Activated T-helper 1 cell treated with anti-CD3 and anti-CD28 coated beads, Interleukin-12 subunit alpha, Interleukin-12 subunit beta, Interleukin-2, Interleukin-4 antibody, amounts not matched to agents 30 ng/mL and 10 ng/mL and 1 ng/mL, durations not matched to agents 14 hours and 24 hours and 36 hours (primary cell): ENCODE measurements at regions of chr14 and their contacts with region 1.

Region 1: GRCh38 chr14:20855652-20856291 is 35.4 kb upstream of the RNASE3 start:
- DNase-seq: peak; percentile 25
- H3K4me3 Mint-ChIP-seq: no peak overlapping the region
- H3K27ac Mint-ChIP-seq: no peak overlapping the region
- H3K4me1 Mint-ChIP-seq: peaks cover 9% of the 10 kb centered on the region
- H3K27me3 Mint-ChIP-seq: peaks cover 13% of the 10 kb centered on the region

Region 2: DNA sequence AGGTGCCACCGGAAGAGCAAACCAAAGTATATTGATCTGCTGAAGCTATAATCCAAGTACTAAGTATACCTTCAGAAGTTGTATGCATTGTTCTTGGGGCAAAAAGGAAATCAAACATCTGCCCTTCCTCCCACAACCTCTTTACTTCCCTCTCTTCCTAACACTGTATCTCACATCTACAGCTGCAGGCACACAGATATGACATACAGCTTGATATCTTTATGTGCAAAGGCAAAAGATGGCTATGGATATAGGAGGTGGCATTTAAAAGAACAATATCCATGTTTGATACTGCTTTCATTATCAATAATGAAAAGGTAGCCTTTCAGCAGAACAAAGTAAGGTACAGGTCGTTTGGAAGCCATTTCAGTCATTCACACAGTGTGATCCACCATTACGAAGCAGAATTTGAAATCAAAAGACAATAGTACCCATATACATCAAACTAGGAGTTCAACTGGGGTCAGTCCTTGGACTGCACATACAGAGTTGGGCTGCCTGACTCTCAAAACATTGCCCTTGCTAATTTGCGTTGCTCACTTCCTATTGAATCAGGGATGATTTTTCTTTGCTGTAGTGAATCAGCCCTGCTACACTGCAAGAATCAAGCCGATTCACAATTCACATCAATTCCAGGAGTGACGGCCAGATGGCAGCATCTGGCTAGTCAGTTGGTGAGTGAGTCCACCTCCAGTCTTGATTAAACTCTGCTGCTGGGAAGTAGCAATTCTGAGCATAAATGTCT is 158.3 kb before region 1 on chr14:
- intact Hi-C with region 1: loop called (anchors 1 kb)
- DNase-seq: peak; percentile 44
- H3K4me3 Mint-ChIP-seq: no peak overlapping the region
- H3K27ac Mint-ChIP-seq: no peak overlapping the region
- H3K4me1 Mint-ChIP-seq: no peaks in the 10 kb centered on the region
- H3K27me3 Mint-ChIP-seq: peaks cover 8% of the 10 kb centered on the region

Region 3: DNA sequence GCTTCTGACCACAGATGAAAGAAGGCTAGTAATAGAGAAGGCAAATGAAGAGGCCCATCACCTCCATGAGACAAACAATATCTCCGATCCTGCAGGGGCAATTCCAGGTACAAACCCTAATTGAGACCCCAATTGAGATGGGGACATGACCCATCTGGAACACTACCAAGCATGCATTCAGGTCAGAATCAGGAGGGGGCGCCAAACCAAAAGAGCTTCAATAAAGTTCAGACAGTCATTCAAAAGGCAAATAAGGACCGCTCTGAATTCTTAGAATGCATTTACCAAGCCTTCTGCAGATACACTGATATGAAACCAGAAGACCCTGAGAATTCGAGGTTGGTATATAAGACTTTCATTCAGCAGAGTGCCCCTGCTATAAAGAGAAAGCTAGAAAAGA is 97.8 kb before region 1 on chr14:
- intact Hi-C with region 1: loop called (anchors 1 kb)
- DNase-seq: no peak
- H3K4me3 Mint-ChIP-seq: no peak overlapping the region
- H3K27ac Mint-ChIP-seq: no peak overlapping the region
- H3K4me1 Mint-ChIP-seq: no peaks in the 10 kb centered on the region
- H3K27me3 Mint-ChIP-seq: no peaks in the 10 kb centered on the region

Region 4: GRCh38 chr14:20873370-20874177 is 17.8 kb after region 1 on chr14:
- intact Hi-C with region 1: loop called (anchors 1 kb)
- DNase-seq: peak; percentile 62
- H3K4me3 Mint-ChIP-seq: no peak overlapping the region
- H3K27ac Mint-ChIP-seq: no peak overlapping the region
- H3K4me1 Mint-ChIP-seq: peaks cover 11% of the 10 kb centered on the region
- H3K27me3 Mint-ChIP-seq: peaks cover 23% of the 10 kb centered on the region